ENCODE measurements at regions of chr18 and their contacts with region 1.

Region 1: GRCh38 chr18:76450452-76451395 is 44.3 kb downstream of the ZNF516 start:
- DNase-seq: peak; percentile 37
- H3K4me3 Mint-ChIP-seq: peak overlapping the region; percentile 77
- H3K27ac Mint-ChIP-seq: peak overlapping the region; percentile 50
- H3K4me1 Mint-ChIP-seq: peaks cover 80% of the 10 kb centered on the region
- H3K27me3 Mint-ChIP-seq: no peaks in the 10 kb centered on the region
- CTCF ChIP-seq: no peak

Region 2: DNA sequence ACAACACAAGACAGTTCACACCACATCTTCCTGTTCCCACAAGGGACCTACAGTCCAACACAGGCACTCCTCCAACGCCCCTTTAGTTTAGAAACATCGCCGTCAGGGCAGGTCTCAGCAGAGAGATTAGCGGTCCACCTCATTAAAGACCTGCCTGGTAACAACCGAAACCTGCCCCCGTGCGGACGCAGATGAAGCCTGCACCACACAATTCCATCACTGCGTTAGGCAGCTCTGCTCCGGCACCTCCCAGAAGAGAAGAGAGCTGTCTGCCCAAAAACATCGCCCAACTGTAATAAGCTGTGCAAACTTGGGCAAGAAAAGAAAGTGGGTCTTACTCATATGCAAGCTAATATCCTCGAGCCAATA is 11.6 kb after region 1 on chr18:
- CTCF ChIA-PET with region 1: interaction called, 10 read pairs
- intact Hi-C with region 1: no loop called
- DNase-seq: no peak
- H3K4me3 Mint-ChIP-seq: no peak overlapping the region
- H3K27ac Mint-ChIP-seq: no peak overlapping the region
- H3K4me1 Mint-ChIP-seq: peaks cover 24% of the 10 kb centered on the region
- H3K27me3 Mint-ChIP-seq: no peaks in the 10 kb centered on the region
- CTCF ChIP-seq: no peak

Region 3: DNA sequence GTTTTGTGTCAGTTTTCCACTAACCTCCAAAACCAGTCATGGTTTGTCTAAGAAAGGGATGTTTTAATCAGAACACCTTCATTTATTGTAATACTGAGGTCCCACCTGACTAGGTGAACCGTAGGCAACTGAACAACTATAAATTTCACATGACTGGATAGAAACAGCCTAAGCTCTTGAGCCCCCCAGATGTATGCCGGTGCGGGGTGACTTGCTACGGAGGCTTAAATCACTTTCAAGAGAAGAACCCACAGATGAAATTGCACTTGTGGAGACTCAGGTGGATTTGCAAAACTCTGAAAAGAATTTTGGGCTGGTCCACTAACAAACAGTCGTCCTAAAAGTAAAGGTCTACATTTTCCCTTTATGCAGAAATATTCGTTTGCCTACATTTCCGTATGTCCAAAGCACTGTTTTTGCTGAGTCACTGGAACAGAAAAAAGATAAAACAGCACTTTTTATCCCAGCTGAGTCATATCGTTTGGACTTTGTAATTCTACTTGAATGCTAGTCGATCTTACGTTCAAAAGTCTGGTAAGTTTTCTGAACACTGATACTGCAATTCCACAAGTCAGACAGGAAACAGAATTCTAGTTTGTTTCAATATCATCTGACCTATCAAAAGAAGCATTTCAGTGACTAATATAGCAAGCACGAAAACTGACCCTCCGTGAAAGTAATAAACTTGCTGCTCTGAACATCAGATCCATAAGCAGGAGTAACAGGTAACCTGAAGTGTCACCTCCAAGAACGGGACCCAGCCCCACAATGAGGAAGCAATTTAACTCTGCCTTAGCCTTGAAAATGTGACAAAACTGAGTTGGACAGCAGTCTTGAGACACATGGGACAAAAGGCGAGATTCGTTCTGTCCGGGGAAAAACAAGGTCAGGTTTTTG is 26.2 kb after region 1 on chr18:
- CTCF ChIA-PET with region 1: interaction called, 5 read pairs
- intact Hi-C with region 1: loop called (anchors 2 kb)
- DNase-seq: peak; percentile 44
- H3K4me3 Mint-ChIP-seq: peak overlapping the region; percentile 61
- H3K27ac Mint-ChIP-seq: peak overlapping the region; percentile 77
- H3K4me1 Mint-ChIP-seq: peaks cover 21% of the 10 kb centered on the region
- H3K27me3 Mint-ChIP-seq: no peaks in the 10 kb centered on the region
- CTCF ChIP-seq: no peak

Region 4: GRCh38 chr18:76604935-76605240 is 154.2 kb after region 1 on chr18:
- CTCF ChIA-PET with region 1: no interaction called
- intact Hi-C with region 1: no loop called
- DNase-seq: no peak
- H3K4me3 Mint-ChIP-seq: no peak overlapping the region
- H3K27ac Mint-ChIP-seq: no peak overlapping the region
- H3K4me1 Mint-ChIP-seq: no peaks in the 10 kb centered on the region
- H3K27me3 Mint-ChIP-seq: no peaks in the 10 kb centered on the region
- CTCF ChIP-seq: no peak

Region 5: GRCh38 chr18:77223653-77224052 is 772.9 kb after region 1 on chr18:
- CTCF ChIA-PET with region 1: no interaction called
- intact Hi-C with region 1: no loop called
- DNase-seq: no peak
- H3K4me3 Mint-ChIP-seq: no peak overlapping the region
- H3K27ac Mint-ChIP-seq: no peak overlapping the region
- H3K4me1 Mint-ChIP-seq: no peaks in the 10 kb centered on the region
- H3K27me3 Mint-ChIP-seq: peaks cover 51% of the 10 kb centered on the region
- CTCF ChIP-seq: no peak